ENCODE measurements at regions of chr2 and their contacts with region 1.

Region 1: DNA sequence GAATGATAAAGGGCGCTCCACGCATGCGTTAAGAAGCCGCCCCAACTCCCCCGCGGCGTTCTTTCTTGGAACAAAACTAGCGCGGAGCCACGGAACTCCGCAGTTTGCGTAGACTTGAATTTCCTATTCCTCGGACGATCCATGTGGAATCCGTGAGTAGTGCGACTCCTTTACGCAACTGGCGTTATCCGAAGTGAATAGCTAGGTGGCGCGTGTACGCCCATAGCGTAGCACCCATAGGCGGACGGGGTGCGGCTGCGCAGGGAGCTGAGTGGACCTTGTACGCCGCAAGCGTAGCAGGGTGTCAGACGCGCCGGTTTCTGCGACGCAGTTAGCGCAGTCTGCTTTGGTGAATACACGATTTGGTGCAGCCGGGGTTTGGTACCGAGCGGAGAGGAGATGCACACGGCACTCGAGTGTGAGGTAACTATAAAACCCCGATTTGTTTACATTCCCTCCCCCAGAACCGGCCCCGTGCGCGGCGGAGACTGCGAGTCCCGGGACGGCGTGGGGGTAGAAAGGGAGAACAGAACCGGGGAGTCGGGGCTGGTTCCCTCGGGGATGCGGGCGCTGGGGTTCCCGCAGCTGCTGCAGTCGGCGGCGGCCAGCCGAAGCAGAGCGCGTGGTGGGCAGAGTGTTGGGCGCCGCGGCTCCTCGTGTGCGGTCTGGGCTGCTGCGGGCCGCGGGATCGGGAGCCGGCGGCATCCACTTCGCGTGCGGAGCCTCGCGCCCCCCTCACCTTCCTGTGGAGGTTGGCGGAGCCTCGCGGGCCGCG is at the start of gene SLC39A10:
- DNase-seq: peak; percentile 95
- ATAC-seq: peak; percentile 91
- H3K4me3 Mint-ChIP-seq: peak within 1 kb of the TSS; percentile 97
- H3K27ac Mint-ChIP-seq: peak within 1 kb of the TSS; percentile 99
- H3K4me1 Mint-ChIP-seq: peaks cover 38% of the 10 kb centered on the region
- H3K27me3 Mint-ChIP-seq: no peaks in the 10 kb centered on the region
- CTCF ChIP-seq: no peak
- total RNA-seq, gene SLC39A10: 141 to 167 TPM (median 144 TPM) in 3 replicates

Region 2: GRCh38 chr2:195498176-195498575 is 158.9 kb before region 1 on chr2:
- CTCF ChIA-PET with region 1: interaction called, 32 read pairs
- POLR2A ChIA-PET with region 1: interaction called, 4 read pairs
- DNase-seq: peak; percentile 50
- ATAC-seq: peak; percentile 50
- H3K4me3 Mint-ChIP-seq: no peak overlapping the region
- H3K27ac Mint-ChIP-seq: no peak overlapping the region
- H3K4me1 Mint-ChIP-seq: no peaks in the 10 kb centered on the region
- H3K27me3 Mint-ChIP-seq: no peaks in the 10 kb centered on the region
- CTCF ChIP-seq: no peak

Region 3: DNA sequence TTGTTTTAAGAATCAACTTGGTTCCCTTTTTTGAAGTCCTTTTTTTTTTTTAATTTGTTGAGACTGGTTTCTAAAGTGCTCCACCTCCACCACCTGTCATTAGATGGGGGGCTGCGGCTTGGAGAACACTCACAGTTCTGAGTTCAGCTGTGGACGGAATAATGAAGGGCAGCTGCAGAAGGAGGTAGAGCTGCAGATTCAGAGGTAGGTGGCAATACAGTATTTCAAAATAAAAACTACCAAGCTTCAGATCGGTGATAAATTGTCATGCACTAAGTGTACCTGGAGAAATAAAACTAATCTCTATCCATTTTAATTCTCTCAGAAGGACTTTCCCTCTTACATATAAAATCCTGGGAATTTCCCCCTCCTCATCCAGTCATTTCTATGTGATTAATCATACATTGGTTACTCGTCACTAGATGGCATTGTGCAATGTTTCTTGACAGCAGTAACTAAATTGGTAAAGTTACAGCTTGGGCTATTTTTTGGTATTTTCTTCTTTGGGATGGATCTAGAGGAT is 81.1 kb before region 1 on chr2:
- CTCF ChIA-PET with region 1: interaction called, 17 read pairs
- POLR2A ChIA-PET with region 1: interaction called, 5 read pairs
- DNase-seq: no peak
- ATAC-seq: peak; percentile 67
- H3K4me3 Mint-ChIP-seq: no peak overlapping the region
- H3K27ac Mint-ChIP-seq: no peak overlapping the region
- H3K4me1 Mint-ChIP-seq: peaks cover 7% of the 10 kb centered on the region
- H3K27me3 Mint-ChIP-seq: peaks cover under 1% of the 10 kb centered on the region; the same call in 1 of the 2 replicates
- CTCF ChIP-seq: no peak

Region 4: GRCh38 chr2:195612611-195613495 is 44.2 kb before region 1 on chr2:
- CTCF ChIA-PET with region 1: interaction called, 5 read pairs
- POLR2A ChIA-PET with region 1: interaction called, 19 read pairs
- DNase-seq: peak; percentile 70
- ATAC-seq: peak; percentile 97
- H3K4me3 Mint-ChIP-seq: peak overlapping the region; percentile 63
- H3K27ac Mint-ChIP-seq: peak overlapping the region; percentile 99
- H3K4me1 Mint-ChIP-seq: peaks cover 75% of the 10 kb centered on the region
- H3K27me3 Mint-ChIP-seq: no peaks in the 10 kb centered on the region
- CTCF ChIP-seq: no peak

Region 5: GRCh38 chr2:196309691-196310090 is 652.6 kb after region 1 on chr2:
- CTCF ChIA-PET with region 1: no interaction called
- POLR2A ChIA-PET with region 1: no interaction called
- DNase-seq: no peak
- ATAC-seq: no peak
- H3K4me3 Mint-ChIP-seq: no peak overlapping the region
- H3K27ac Mint-ChIP-seq: no peak overlapping the region
- H3K4me1 Mint-ChIP-seq: peaks cover 9% of the 10 kb centered on the region
- H3K27me3 Mint-ChIP-seq: no peaks in the 10 kb centered on the region
- CTCF ChIP-seq: no peak

Region 6: GRCh38 chr2:196639180-196640030 is 982.4 kb after region 1 on chr2 and contains the start of gene CCDC150:
- CTCF ChIA-PET with region 1: no interaction called
- POLR2A ChIA-PET with region 1: no interaction called
- DNase-seq: peak; percentile 97
- ATAC-seq: peak; percentile 98
- H3K4me3 Mint-ChIP-seq: peak within 1 kb of the TSS; percentile 83
- H3K27ac Mint-ChIP-seq: peak within 1 kb of the TSS; percentile 94
- H3K4me1 Mint-ChIP-seq: peaks cover 48% of the 10 kb centered on the region
- H3K27me3 Mint-ChIP-seq: no peaks in the 10 kb centered on the region; the same call in 1 of the 2 replicates
- CTCF ChIP-seq: no peak
- total RNA-seq, gene CCDC150: 37.1 to 43.0 TPM (median 38.2 TPM) in 3 replicates

Measured in WTC11 (cell line).